ENCODE measurements at regions of chr10 and their contacts with region 1.

Region 1: DNA sequence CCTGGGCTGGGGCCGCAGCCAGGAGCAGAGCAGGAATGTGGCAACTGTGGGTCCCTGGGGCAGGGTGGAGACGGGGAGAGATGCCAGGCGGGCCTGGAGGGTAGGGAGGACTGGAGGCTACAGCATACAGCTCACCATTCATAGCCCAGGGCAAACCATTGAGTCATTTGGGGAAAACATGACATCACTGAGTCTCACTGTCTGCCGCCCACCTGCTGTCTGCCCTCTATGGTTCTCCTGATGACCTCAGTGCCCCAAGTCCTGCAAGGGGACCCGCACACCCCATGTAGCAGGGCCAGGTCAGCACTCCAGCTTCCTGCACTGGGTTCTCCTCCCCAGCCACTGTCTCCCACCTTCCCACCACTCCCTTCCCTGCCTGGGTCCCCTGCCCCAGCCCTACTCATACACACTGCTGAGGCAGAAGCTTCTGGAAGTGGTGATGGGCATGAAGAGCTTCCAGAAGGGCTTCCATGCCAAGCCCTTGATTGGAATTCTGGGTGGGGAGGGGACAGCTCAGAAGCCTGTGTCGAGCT is 10.4 kb downstream of the CHST3 start:
- DNase-seq: no peak
- H3K4me3 Mint-ChIP-seq: no peak overlapping the region
- H3K27ac Mint-ChIP-seq: no peak overlapping the region
- H3K4me1 Mint-ChIP-seq: peaks cover 22% of the 10 kb centered on the region
- H3K27me3 Mint-ChIP-seq: no peaks in the 10 kb centered on the region

Region 2: DNA sequence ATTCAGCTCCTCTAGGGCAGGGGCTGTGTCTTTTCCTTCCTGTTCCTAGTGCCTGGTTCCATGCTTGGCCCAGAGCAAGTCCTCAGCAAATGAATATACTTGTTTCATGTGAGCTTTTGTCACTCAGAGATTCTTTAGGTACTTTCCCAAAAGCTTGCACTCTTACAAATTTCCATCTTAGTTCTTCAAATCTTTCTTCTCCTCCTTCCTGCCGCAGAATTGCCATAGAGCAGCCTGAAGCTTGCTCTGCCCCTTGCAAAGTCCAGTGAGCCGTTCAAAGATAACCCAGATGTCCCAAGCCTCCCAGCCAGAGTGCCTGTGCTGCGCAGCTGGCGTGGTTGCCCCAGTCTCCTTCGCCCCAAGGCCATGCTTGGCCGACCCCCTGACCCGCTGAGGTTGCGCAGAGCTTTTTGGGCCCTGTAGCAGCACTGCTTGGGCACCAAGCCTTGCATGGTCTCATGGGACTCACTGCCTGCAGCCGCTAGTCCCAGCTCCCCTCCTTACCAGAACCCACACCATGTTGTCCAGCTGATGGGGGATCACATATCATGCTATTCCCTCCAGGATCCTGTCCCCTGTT is 10.3 kb after region 1 on chr10:
- intact Hi-C with region 1: loop called (anchors 1 kb)
- DNase-seq: no peak
- H3K4me3 Mint-ChIP-seq: no peak overlapping the region
- H3K27ac Mint-ChIP-seq: peak overlapping the region; percentile 24
- H3K4me1 Mint-ChIP-seq: peaks cover 11% of the 10 kb centered on the region
- H3K27me3 Mint-ChIP-seq: peaks cover 4% of the 10 kb centered on the region